ENCODE measurements at regions of chr6 and their contacts with region 1.

Region 1: DNA sequence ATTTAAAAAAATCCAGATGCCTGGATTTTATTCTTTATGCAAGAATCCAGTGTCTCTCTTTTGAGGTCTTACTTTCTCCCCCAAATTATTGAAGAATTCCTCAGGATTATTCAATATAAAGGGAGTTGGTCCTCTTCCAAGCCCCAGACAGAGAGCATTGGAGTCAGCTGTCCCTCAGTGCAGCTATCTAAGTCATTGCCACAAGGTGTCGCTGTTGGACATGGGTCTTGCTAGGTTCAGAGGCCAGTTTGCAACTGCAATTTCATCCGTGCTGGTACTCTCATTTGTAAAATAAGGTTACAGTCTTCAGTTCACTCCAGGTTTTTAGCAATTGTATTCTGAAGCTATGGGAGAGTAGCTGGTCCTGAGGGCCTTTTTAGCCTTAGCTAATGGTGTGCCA is 27.8 kb downstream of the CCN2 start:
- DNase-seq: no peak
- H3K4me3 ChIP-seq: no peak overlapping the region
- H3K27ac ChIP-seq: no peak overlapping the region
- H3K4me1 ChIP-seq: no peaks in the 10 kb centered on the region
- H3K27me3 ChIP-seq: peaks cover 0 to 4% (median 0%) of the 10 kb centered on the region in 4 donors
- CTCF ChIP-seq: peak in 5 of 6 experiments; percentile 47 to 78 (median 59)
- POLR2A ChIP-seq: no peak

Region 2: GRCh38 chr6:131831392-131831791 is 92.0 kb before region 1 on chr6:
- intact Hi-C with region 1: no loop called
- DNase-seq: no peak
- H3K4me3 ChIP-seq: no peak overlapping the region
- H3K27ac ChIP-seq: no peak overlapping the region
- H3K4me1 ChIP-seq: peaks cover 0 to 23% (median 0%) of the 10 kb centered on the region in 3 donors
- H3K27me3 ChIP-seq: no peaks in the 10 kb centered on the region
- CTCF ChIP-seq: no peak
- POLR2A ChIP-seq: no peak

Region 3: GRCh38 chr6:132227904-132228303 is 304.5 kb after region 1 on chr6:
- intact Hi-C with region 1: loop called (anchors 10 kb)
- DNase-seq: no peak
- H3K4me3 ChIP-seq: no peak overlapping the region
- H3K27ac ChIP-seq: no peak overlapping the region
- H3K4me1 ChIP-seq: no peaks in the 10 kb centered on the region
- H3K27me3 ChIP-seq: no peaks in the 10 kb centered on the region
- CTCF ChIP-seq: no peak
- POLR2A ChIP-seq: no peak

Region 4: DNA sequence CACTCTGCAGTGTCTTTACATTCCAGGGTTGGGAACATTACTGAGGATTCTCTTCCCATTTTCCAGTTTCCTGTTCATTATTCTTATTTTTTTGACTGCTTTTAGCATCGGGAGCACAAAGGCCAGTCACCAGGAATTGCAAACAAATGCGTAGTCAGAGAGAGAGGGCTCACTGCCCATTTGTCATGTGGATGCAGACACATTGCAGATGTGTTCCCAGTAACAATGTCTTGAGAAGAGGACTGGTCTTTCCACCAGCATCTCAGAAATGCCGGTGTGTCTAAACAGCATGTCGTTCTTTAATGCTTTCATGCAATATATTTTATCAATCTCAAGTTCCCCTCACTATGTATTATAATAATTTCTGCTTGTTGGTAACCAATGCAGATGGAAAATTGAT is 645.8 kb after region 1 on chr6:
- intact Hi-C with region 1: no loop called
- DNase-seq: no peak
- H3K4me3 ChIP-seq: no peak overlapping the region
- H3K27ac ChIP-seq: no peak overlapping the region
- H3K4me1 ChIP-seq: no peaks in the 10 kb centered on the region
- H3K27me3 ChIP-seq: peaks cover 0 to 18% (median 0%) of the 10 kb centered on the region in 4 donors
- CTCF ChIP-seq: no peak
- POLR2A ChIP-seq: no peak